ENCODE measurements at regions of chr3 and their contacts with region 1.

Region 1: DNA sequence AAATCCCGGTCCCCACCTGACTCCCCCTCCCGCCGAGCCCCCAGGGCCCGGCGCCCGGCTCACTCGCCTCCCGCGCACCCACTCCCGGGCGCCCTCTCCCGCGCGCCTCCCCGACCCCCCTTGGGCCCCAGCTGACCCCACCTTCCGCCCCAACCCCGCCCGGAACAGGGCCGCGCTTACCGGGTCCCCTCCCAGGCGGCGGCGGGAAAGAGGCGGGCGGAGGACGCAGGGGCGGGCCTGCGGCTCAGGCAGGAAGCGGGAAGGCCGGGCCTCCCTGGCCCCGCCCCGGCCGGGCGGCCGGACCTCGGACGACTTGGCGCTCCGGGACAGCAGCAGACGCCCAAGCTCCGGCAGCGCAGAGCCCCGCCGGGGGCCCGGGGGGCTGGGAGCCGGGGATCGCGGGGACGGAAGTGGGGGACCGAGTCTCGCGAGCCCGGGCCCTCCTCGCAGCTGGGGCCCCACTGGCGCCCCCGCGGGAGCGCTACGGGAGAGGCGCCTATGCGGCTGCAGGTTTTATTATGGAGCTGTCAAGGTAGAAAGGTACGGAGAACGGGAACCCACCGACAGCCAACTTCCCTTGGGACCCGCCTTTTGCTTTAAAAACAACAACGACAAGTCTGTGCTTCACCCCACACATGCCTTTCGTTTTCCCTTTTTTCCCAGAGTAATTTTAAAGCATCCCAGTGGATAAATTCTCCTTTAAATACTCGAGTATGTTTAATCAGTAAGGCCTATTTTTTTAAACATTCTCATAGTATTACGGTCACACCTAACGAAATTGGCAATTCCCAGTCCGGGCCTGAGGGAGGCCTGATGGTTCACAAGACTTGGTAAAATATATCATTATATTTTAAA is at the start of gene SLC41A3:
- DNase-seq: peak; percentile 73 to 94 (median 84)
- ATAC-seq: peak; percentile 95
- H3K4me3 ChIP-seq: peak within 1 kb of the TSS; percentile 73
- H3K4me3 Mint-ChIP-seq: peak within 1 kb of the TSS; percentile 82 to 94 (median 91)
- H3K27ac ChIP-seq: peak within 1 kb of the TSS; percentile 91
- H3K27ac Mint-ChIP-seq: peak within 1 kb of the TSS; percentile 87 to 96 (median 91)
- H3K4me1 ChIP-seq: peaks cover 0 to 16% of the 10 kb centered on the region in 2 donors
- H3K4me1 Mint-ChIP-seq: peaks cover 11 to 27% (median 20%) of the 10 kb centered on the region in 7 donors
- H3K27me3 ChIP-seq: no peaks in the 10 kb centered on the region
- H3K27me3 Mint-ChIP-seq: peaks cover 0 to 4% (median 0%) of the 10 kb centered on the region in 5 donors
- total RNA-seq, gene SLC41A3: 24.1 to 33.6 (median 29.6) TPM

Region 2: GRCh38 chr3:124730129-124730940 is 1353.8 kb before region 1 on chr3 and contains the start of gene UMPS:
- CTCF ChIA-PET with region 1: no interaction called
- POLR2A ChIA-PET with region 1: no interaction called
- intact Hi-C with region 1: loop called (anchors 5 to 10 kb)
- DNase-seq: peak; percentile 85 to 94 (median 91)
- ATAC-seq: peak; percentile 97
- H3K4me3 ChIP-seq: peak within 1 kb of the TSS; percentile 78
- H3K4me3 Mint-ChIP-seq: peak within 1 kb of the TSS; percentile 93 to 100 (median 98)
- H3K27ac ChIP-seq: peak within 1 kb of the TSS; percentile 77
- H3K27ac Mint-ChIP-seq: peak within 1 kb of the TSS; percentile 96 to 100 (median 98)
- H3K4me1 ChIP-seq: peaks cover 11 to 32% of the 10 kb centered on the region in 2 donors
- H3K4me1 Mint-ChIP-seq: peaks cover 20 to 51% (median 48%) of the 10 kb centered on the region in 7 donors
- H3K27me3 ChIP-seq: peaks cover 0 to 4% of the 10 kb centered on the region in 2 donors
- H3K27me3 Mint-ChIP-seq: peaks cover 9 to 27% (median 19%) of the 10 kb centered on the region in 5 donors
- total RNA-seq, gene UMPS: 13.2 to 34.8 (median 24.8) TPM

Region 3: GRCh38 chr3:125967138-125967537 is 117.0 kb before region 1 on chr3:
- CTCF ChIA-PET with region 1: no interaction called
- POLR2A ChIA-PET with region 1: interaction called, 3 read pairs
- intact Hi-C with region 1: loop called (anchors 1 to 5 kb)
- DNase-seq: no peak
- ATAC-seq: no peak
- H3K4me3 ChIP-seq: no peak overlapping the region
- H3K4me3 Mint-ChIP-seq: no peak overlapping the region
- H3K27ac ChIP-seq: no peak overlapping the region
- H3K27ac Mint-ChIP-seq: no peak overlapping the region
- H3K4me1 ChIP-seq: peaks cover 2 to 5% of the 10 kb centered on the region in 2 donors
- H3K4me1 Mint-ChIP-seq: peaks cover 0 to 4% (median 4%) of the 10 kb centered on the region in 7 donors
- H3K27me3 ChIP-seq: peaks cover 3 to 6% of the 10 kb centered on the region in 2 donors
- H3K27me3 Mint-ChIP-seq: peaks cover 16 to 24% (median 22%) of the 10 kb centered on the region in 5 donors

Region 4: DNA sequence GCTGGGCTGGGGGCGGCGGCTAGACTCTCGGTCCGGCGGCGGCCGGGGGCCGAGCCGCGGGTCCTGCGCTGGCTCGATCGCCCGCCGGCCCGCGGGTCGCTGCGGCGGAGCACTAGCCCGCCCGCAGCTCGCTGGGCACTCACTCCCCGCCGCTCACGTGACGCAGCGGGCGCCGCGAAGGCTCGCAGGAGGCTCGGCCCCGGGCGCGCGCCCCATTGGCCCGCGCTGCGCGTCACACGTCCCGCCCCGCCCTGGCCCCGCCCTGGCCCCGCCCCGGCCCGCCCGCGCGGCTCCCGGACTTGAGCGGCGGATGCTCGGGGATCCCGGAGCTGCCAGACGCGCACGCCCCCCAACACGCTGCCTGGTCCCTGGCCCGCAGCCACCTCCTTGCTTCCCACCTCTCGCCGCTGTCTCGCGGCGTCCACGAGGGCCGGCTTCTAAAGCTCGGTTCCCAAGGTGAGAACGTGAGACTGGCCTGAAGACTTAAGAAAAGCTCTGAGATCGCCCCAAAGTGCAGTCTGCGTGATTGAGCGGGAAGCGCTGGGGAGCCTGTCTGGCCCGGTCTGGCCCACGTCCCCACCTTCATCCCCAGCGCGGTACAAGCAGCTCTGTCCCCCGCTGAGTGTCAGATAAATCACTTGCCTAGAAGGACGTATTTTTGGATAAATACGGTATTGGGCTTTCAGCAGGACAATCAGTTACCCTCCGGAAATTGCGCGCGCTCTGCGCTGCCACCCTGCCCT is 273.3 kb after region 1 on chr3 and contains the start of gene KLF15:
- CTCF ChIA-PET with region 1: no interaction called
- POLR2A ChIA-PET with region 1: no interaction called
- intact Hi-C with region 1: loop called (anchors 2 kb)
- DNase-seq: peak; percentile 50 to 84 (median 66)
- ATAC-seq: peak; percentile 95
- H3K4me3 ChIP-seq: peak within 1 kb of the TSS; percentile 67
- H3K4me3 Mint-ChIP-seq: peak within 1 kb of the TSS; percentile 89 to 95 (median 91)
- H3K27ac ChIP-seq: no peak within 1 kb of the TSS
- H3K27ac Mint-ChIP-seq: peak within 1 kb of the TSS in 5 of 9 donors; percentile 45 to 93 (median 72)
- H3K4me1 ChIP-seq: peaks cover 4 to 7% of the 10 kb centered on the region in 2 donors
- H3K4me1 Mint-ChIP-seq: peaks cover 4 to 17% (median 11%) of the 10 kb centered on the region in 7 donors
- H3K27me3 ChIP-seq: peaks cover 9 to 10% of the 10 kb centered on the region in 2 donors
- H3K27me3 Mint-ChIP-seq: peaks cover 45 to 52% (median 46%) of the 10 kb centered on the region in 5 donors
- total RNA-seq, gene KLF15: 0.57 to 0.81 TPM in 2 of 5 experiments, not detected in the others

Region 5: DNA sequence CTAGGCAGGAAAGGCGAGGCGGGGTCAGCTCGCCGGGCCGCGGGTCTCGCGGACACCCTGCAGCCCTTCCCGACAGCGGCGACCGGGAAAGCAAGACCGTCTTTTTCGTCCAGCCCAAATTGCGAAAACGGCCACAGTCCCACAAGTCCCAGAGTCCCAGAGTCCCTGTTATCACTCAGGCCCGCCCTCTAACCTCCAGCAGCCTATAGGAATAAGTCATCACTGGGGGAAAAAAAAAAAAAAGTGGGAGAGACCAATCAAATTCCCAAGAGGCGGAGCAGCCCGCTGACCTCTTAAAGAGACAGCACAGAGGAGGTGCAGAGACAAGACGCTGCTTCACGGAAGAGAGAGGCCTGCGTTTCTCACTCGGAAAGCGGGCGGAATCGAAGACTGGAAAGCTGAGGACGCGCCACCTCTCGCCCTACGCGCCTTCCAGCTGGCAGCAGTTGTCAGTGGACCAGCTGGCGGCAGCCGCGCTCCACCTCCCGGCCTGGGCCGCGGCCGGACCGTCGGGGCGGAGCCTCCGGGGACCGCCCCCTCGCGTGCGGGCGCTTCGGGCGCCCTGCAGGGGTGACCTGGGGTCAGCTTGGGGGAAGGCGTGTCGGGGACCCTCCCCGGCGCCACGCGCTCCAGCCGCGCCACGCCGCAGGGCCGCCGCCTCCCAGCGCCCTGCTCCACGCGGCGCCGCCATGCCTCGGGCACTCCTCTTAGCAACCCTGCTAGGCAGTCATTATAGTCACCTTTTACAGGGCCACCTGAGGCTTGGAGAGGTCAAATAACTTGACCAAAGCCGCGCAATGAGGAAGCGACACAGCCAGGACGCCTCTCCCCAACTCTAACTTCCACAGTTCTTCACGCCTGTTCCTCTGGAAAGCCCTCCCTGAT is 1506.7 kb after region 1 on chr3 and contains the start of gene TPRA1:
- CTCF ChIA-PET with region 1: no interaction called
- POLR2A ChIA-PET with region 1: interaction called, 3 read pairs
- intact Hi-C with region 1: loop called in 1 of 2 experiments (anchors 10 kb)
- DNase-seq: peak; percentile 58 to 90 (median 85)
- ATAC-seq: peak; percentile 90
- H3K4me3 ChIP-seq: peak within 1 kb of the TSS; percentile 91
- H3K4me3 Mint-ChIP-seq: peak within 1 kb of the TSS; percentile 86 to 99 (median 96)
- H3K27ac ChIP-seq: peak within 1 kb of the TSS; percentile 80
- H3K27ac Mint-ChIP-seq: peak within 1 kb of the TSS; percentile 86 to 96 (median 94)
- H3K4me1 ChIP-seq: peaks cover 11 to 12% of the 10 kb centered on the region in 2 donors
- H3K4me1 Mint-ChIP-seq: peaks cover 14 to 51% (median 43%) of the 10 kb centered on the region in 7 donors
- H3K27me3 ChIP-seq: no peaks in the 10 kb centered on the region
- H3K27me3 Mint-ChIP-seq: no peaks in the 10 kb centered on the region
- total RNA-seq, gene TPRA1: 13.6 to 30.6 (median 24.5) TPM